ENCODE measurements at regions of chr22 and their contacts with region 1.

Region 1: DNA sequence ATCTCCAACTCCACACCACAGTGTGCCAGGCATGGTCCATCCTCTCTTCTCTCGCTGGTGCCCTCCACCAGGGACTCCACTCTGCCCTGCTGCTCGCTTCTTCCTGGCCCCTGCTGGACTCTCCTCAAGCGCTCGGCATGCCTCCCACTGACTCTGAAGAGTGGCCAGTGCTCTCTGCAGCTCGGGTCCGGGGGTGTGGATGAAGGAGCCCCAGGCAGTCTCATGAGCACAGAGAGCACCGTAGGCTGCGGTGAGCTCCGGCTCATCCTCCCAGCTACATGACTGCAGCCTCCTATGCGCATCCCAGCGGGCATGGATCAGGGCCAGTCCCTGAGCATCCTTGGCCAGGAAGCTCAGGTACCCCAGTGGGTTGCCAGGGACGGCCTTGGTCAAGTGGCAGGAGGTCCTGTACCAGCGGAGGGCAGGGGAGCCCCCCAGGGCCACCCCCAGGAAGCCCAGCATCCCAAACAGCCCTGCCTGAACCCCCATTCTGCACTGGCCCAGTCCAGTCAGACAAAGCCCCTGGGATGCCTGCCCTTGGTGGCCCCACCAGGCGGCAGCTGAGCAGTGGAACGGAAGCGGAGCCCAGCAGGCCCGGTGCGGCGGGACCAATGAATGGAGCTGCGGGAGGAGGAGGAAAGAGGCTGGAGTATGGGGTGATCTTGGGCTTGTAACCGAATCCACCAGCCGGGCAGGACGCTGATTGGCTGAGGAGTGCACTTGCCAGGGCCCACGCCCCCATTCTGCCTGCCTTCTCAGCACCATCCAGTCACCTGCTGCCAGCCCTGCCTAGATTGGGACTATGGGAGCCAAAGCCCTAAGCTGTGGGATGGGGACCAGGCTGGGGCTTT is at the start of gene PLA2G3:
- DNase-seq: peak; percentile 94
- ATAC-seq: peak; percentile 98
- H3K4me3 Mint-ChIP-seq: peak within 1 kb of the TSS; percentile 86
- H3K27ac Mint-ChIP-seq: peak within 1 kb of the TSS; percentile 82
- H3K4me1 Mint-ChIP-seq: peaks cover 22% of the 10 kb centered on the region
- H3K27me3 Mint-ChIP-seq: peaks cover 9% of the 10 kb centered on the region
- CTCF ChIP-seq: no peak
- total RNA-seq, gene PLA2G3: 14.7 to 18.3 TPM (median 15.1 TPM) in 3 replicates

Region 2: GRCh38 chr22:30150212-30150611 is 989.9 kb before region 1 on chr22:
- CTCF ChIA-PET with region 1: no interaction called
- POLR2A ChIA-PET with region 1: no interaction called
- DNase-seq: no peak
- ATAC-seq: no peak
- H3K4me3 Mint-ChIP-seq: no peak overlapping the region
- H3K27ac Mint-ChIP-seq: no peak overlapping the region
- H3K4me1 Mint-ChIP-seq: no peaks in the 10 kb centered on the region
- H3K27me3 Mint-ChIP-seq: peaks cover 7% of the 10 kb centered on the region
- CTCF ChIP-seq: no peak

Region 3: GRCh38 chr22:31122532-31123291 is 17.4 kb before region 1 on chr22 and contains the start of gene INPP5J:
- CTCF ChIA-PET with region 1: interaction called, 21 read pairs
- POLR2A ChIA-PET with region 1: interaction called, 16 read pairs
- DNase-seq: peak; percentile 65
- ATAC-seq: peak; percentile 54
- H3K4me3 Mint-ChIP-seq: peak within 1 kb of the TSS; percentile 58
- H3K27ac Mint-ChIP-seq: no peak within 1 kb of the TSS
- H3K4me1 Mint-ChIP-seq: peaks cover 34% of the 10 kb centered on the region
- H3K27me3 Mint-ChIP-seq: peaks cover 3% of the 10 kb centered on the region; the same call in 1 of the 2 replicates
- CTCF ChIP-seq: no peak
- total RNA-seq, gene INPP5J: 6.2 to 9.0 TPM (median 7.7 TPM) in 3 replicates